ENCODE measurements at regions of chr16 and their contacts with region 1.

Region 1: GRCh38 chr16:54286090-54286993 is at the start of gene IRX3:
- DNase-seq: peak; percentile 90 to 96 (median 91)
- ATAC-seq: peak; percentile 80 to 82 (median 80)
- H3K4me3 ChIP-seq: peak within 1 kb of the TSS; percentile 62 to 94 (median 76)
- H3K27ac ChIP-seq: peak within 1 kb of the TSS; percentile 76 to 98 (median 94)
- H3K4me1 ChIP-seq: peaks cover 0 to 29% (median 12%) of the 10 kb centered on the region in 12 donors
- H3K27me3 ChIP-seq: peaks cover 0 to 98% (median 9%) of the 10 kb centered on the region in 9 donors
- CTCF ChIP-seq: no peak
- POLR2A ChIP-seq: peak in 1 of 2 donors; percentile 59
- total RNA-seq, gene IRX3: 28.6 to 101 (median 46.0) TPM

Region 2: GRCh38 chr16:53945996-53946395 is 340.3 kb before region 1 on chr16:
- intact Hi-C with region 1: loop called in 2 of 10 experiments (anchors 10 kb)
- DNase-seq: no peak
- ATAC-seq: peak in 3 of 4 donors; percentile 60 to 76 (median 71)
- H3K4me3 ChIP-seq: no peak overlapping the region
- H3K27ac ChIP-seq: no peak overlapping the region
- H3K4me1 ChIP-seq: peaks cover 0 to 8% (median 0%) of the 10 kb centered on the region in 12 donors
- H3K27me3 ChIP-seq: no peaks in the 10 kb centered on the region
- CTCF ChIP-seq: peak; percentile 51 to 78 (median 72)
- POLR2A ChIP-seq: no peak

Region 3: DNA sequence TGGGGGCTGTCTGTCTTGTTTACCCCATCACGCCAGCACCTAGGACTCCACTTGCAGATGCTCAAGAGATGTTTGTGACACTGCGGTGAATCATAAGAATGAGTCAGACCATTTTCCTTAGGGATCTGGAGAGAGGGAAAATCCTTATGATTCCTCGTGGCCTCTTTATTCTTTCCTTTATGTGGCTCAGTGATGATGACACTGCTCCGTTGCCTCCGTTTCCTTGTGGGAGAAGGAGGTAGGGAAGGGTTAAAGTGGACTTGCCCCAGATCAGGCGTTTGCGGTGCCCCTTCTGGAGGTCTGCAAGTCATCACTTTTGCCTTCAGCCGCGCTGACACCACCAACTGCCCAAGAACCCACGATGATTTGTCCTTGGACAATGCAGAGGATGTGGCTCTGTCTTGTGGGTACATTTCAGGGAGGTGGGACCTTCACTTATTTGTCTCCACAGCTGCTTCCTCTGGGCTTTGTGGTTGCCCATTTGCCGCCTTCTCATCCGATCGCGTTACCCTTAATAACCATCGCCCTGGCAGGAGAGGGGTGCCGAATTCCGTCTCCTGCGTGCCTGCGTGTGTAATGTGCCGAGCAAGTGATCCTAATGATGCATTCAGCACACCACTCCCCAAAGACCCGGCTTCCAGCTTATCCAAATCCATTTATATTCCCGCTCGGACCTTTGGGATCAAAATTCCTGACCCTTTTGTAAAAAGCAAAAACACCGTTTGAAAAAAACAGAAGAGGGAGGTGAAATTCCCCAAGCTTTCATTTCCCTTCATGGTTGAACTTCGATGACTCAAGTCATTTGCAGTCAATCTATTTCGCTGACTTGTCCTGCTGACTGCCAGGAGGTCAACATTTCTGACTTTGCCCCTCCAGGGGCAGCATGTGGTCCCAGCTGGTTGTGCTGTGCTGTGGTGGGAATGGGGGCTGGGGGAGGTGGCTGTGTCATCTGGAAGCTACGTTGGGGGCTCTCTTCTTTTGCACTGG is 87.5 kb after region 1 on chr16:
- intact Hi-C with region 1: no loop called
- DNase-seq: no peak
- ATAC-seq: peak in 1 of 4 donors; percentile 44
- H3K4me3 ChIP-seq: peak overlapping the region in 1 of 12 donors; percentile 18
- H3K27ac ChIP-seq: no peak overlapping the region
- H3K4me1 ChIP-seq: peaks cover 0 to 11% (median 0%) of the 10 kb centered on the region in 12 donors
- H3K27me3 ChIP-seq: peaks cover 0 to 24% (median 0%) of the 10 kb centered on the region in 9 donors
- CTCF ChIP-seq: no peak
- POLR2A ChIP-seq: no peak

Region 4: DNA sequence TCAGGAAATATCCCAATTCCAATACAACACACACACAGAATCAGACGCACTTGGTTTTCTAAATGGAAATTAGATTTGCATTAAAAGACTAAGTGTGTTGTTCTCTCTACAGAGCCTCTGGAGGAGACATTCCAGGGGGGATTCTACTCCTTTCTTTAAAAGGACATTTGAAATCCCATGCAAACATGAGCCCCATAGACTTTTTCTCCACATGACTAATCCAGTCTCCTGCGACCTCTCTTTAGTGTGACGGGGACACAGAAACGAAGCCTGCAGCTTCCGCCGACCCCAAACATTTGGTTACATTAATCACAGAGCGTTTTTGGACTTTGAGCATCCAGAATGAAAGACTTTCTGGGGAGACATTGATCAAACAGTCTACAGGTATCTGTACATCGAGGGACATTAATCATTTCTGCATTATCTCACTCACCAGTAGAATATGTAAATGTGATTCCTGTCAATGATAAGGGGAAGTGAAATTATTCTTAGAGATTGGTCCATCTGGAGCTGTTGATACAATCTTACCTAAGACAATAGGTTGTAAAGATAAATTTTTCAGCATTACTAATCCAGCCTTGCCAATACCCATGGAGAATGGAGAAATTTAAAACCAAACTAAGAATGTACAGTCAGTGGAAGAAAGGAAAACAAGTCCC is 103.6 kb after region 1 on chr16:
- intact Hi-C with region 1: no loop called
- DNase-seq: no peak
- ATAC-seq: no peak
- H3K4me3 ChIP-seq: no peak overlapping the region
- H3K27ac ChIP-seq: no peak overlapping the region
- H3K4me1 ChIP-seq: no peaks in the 10 kb centered on the region
- H3K27me3 ChIP-seq: no peaks in the 10 kb centered on the region
- CTCF ChIP-seq: no peak
- POLR2A ChIP-seq: no peak

Region 5: GRCh38 chr16:54407596-54407995 is 121.3 kb after region 1 on chr16:
- intact Hi-C with region 1: loop called in 3 of 10 experiments (anchors 10 kb)
- DNase-seq: no peak
- ATAC-seq: no peak
- H3K4me3 ChIP-seq: no peak overlapping the region
- H3K27ac ChIP-seq: no peak overlapping the region
- H3K4me1 ChIP-seq: peaks cover 0 to 21% (median 11%) of the 10 kb centered on the region in 12 donors
- H3K27me3 ChIP-seq: peaks cover 0 to 3% (median 0%) of the 10 kb centered on the region in 9 donors
- CTCF ChIP-seq: no peak
- POLR2A ChIP-seq: no peak

Region 6: DNA sequence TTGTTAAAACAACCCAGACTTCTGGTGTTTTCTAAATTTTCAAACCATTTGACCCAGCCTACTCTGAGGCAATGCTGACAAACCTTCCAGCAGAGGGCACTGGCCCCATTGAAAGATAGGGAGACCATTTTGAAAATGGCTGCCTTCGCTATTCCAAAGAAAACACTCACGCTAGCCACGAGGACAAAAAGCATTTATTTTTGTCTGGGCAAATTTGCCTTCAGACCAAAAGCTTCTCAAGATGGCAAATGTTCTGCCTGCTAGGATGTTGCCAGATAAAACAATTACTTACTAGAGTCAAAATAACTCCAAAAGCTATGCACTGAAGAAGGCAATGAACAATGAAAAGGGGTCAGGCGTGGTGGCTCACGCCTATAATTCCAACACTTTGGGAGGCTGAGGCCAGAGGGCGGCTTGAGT is 347.6 kb after region 1 on chr16:
- intact Hi-C with region 1: loop called in 1 of 10 experiments (anchors 10 kb)
- DNase-seq: peak in 2 of 5 donors; percentile 29 to 38
- ATAC-seq: peak in 2 of 4 donors; percentile 33 to 62
- H3K4me3 ChIP-seq: no peak overlapping the region
- H3K27ac ChIP-seq: no peak overlapping the region
- H3K4me1 ChIP-seq: peaks cover 0 to 4% (median 0%) of the 10 kb centered on the region in 12 donors
- H3K27me3 ChIP-seq: no peaks in the 10 kb centered on the region
- CTCF ChIP-seq: peak in 11 of 12 donors; percentile 25 to 65 (median 46)
- POLR2A ChIP-seq: no peak

Region 7: GRCh38 chr16:54929090-54930004 is 643.0 kb after region 1 on chr16:
- intact Hi-C with region 1: loop called in 9 of 10 experiments (anchors 2 to 5 kb)
- DNase-seq: peak; percentile 99 to 100 (median 100)
- ATAC-seq: peak; percentile 91 to 97 (median 93)
- H3K4me3 ChIP-seq: peak overlapping the region; percentile 60 to 86 (median 74)
- H3K27ac ChIP-seq: peak overlapping the region; percentile 79 to 96 (median 90)
- H3K4me1 ChIP-seq: peaks cover 0 to 39% (median 7%) of the 10 kb centered on the region in 12 donors
- H3K27me3 ChIP-seq: peaks cover 0 to 71% (median 26%) of the 10 kb centered on the region in 9 donors
- CTCF ChIP-seq: peak in 4 of 12 donors; percentile 23 to 47 (median 30)
- POLR2A ChIP-seq: peak; percentile 49 to 60

Region 8: DNA sequence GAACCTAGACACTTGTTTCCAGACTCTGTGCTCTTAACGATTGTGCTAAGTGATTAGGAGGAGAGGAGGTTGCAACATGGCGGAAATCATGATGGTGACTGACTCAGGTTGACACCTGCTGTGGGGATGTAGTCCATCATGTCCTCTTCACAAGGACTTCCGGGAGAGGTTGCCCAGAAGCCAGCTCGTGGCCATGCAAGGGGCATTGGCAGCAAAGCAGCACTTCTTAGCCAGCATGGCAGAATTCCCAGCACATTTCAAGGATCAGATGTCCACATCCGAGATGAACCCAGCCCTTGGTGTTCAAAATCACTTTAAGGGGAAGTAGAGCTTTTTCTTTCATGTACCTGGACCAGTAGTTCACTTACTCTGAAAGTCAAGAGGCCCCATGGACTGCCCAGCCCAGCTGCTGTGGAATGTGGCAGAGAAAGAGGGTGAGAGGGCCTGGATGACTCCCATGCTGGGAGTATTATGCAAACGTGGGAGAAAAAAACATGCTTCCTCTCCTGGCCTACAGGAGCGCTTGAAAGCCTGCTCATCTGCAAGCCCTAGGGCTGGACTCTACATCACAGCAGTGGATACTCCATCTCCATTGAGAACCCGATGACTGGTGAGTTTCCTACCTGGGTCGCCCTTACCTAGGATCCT is 1103.2 kb after region 1 on chr16:
- intact Hi-C with region 1: loop called in 1 of 10 experiments (anchors 5 kb)
- DNase-seq: peak in 4 of 5 donors; percentile 56 to 84 (median 68)
- ATAC-seq: peak; percentile 59 to 78 (median 67)
- H3K4me3 ChIP-seq: peak overlapping the region in 3 of 12 donors; percentile 29 to 41 (median 38)
- H3K27ac ChIP-seq: peak overlapping the region; percentile 12 to 98 (median 72)
- H3K4me1 ChIP-seq: peaks cover 0 to 57% (median 7%) of the 10 kb centered on the region in 12 donors
- H3K27me3 ChIP-seq: no peaks in the 10 kb centered on the region
- CTCF ChIP-seq: no peak
- POLR2A ChIP-seq: no peak